Activated B cell treated with CpG ODN at 0.5 μM for 24 hours (primary cell): ENCODE measurements at regions of chr6 and their contacts with region 1.

Region 1: GRCh38 chr6:166786704-166787293 is 159.7 kb upstream of the RPS6KA2 start:
- DNase-seq: no peak
- ATAC-seq: peak; percentile 74
- H3K4me3 Mint-ChIP-seq: no peak overlapping the region
- H3K27ac Mint-ChIP-seq: no peak overlapping the region
- H3K4me1 Mint-ChIP-seq: no peaks in the 10 kb centered on the region
- H3K27me3 Mint-ChIP-seq: no peaks in the 10 kb centered on the region
- CTCF ChIP-seq: no peak

Region 2: GRCh38 chr6:166640342-166641043 is 146.3 kb before region 1 on chr6:
- CTCF ChIA-PET with region 1: no interaction called
- POLR2A ChIA-PET with region 1: no interaction called
- intact Hi-C with region 1: no loop called
- DNase-seq: no peak
- ATAC-seq: no peak
- H3K4me3 Mint-ChIP-seq: no peak overlapping the region
- H3K27ac Mint-ChIP-seq: no peak overlapping the region
- H3K4me1 Mint-ChIP-seq: peaks cover 25% of the 10 kb centered on the region
- H3K27me3 Mint-ChIP-seq: peaks cover 40% of the 10 kb centered on the region
- CTCF ChIP-seq: no peak

Region 3: DNA sequence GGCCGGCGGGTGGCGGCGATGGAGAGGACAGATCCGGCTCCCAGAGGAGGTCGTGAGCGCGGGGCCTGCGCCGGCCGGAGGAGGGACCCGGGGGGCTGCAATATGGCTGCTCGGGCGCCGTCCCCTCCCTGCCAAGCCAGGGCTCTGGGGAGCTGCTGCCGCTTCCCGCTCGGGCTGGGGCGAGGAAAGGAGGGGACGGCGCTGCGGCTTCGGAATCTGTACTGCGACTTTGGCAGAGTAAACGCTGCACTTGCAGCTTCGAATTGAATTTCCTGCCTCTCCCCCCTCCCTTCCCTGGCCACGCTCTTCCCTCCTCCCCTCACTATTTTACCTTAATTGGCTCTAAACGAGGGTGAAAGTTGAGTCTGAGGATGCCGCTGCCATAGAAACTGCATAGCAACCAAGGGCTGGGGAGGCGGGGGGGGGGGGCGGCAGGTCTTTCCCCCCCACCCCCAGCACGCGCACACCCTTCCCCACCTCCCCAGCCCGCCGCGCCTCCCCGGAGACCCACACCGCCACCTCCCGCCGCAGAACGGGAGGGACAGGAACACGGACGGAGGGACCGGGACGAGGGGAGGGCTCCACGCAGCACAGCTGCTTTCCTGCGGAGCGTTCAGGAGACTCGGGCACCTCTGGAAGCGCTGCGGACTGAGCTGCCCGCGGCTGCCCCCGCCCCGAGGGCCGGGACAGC is 75.6 kb after region 1 on chr6:
- CTCF ChIA-PET with region 1: interaction called, 6 read pairs
- POLR2A ChIA-PET with region 1: no interaction called
- intact Hi-C with region 1: loop called (anchors 10 kb)
- DNase-seq: peak; percentile 28
- ATAC-seq: peak; percentile 74
- H3K4me3 Mint-ChIP-seq: peak overlapping the region; percentile 82
- H3K27ac Mint-ChIP-seq: no peak overlapping the region
- H3K4me1 Mint-ChIP-seq: peaks cover 6% of the 10 kb centered on the region
- H3K27me3 Mint-ChIP-seq: peaks cover 13% of the 10 kb centered on the region
- CTCF ChIP-seq: no peak

Region 4: GRCh38 chr6:167079853-167080297 is 293.1 kb after region 1 on chr6:
- CTCF ChIA-PET with region 1: no interaction called
- POLR2A ChIA-PET with region 1: no interaction called
- intact Hi-C with region 1: loop called (anchors 2 kb)
- DNase-seq: peak; percentile 65
- ATAC-seq: peak; percentile 99
- H3K4me3 Mint-ChIP-seq: peak overlapping the region; percentile 54
- H3K27ac Mint-ChIP-seq: peak overlapping the region; percentile 91
- H3K4me1 Mint-ChIP-seq: peaks cover 52% of the 10 kb centered on the region
- H3K27me3 Mint-ChIP-seq: no peaks in the 10 kb centered on the region
- CTCF ChIP-seq: peak; percentile 51